ENCODE measurements at regions of chr13 and their contacts with region 1.

Region 1: DNA sequence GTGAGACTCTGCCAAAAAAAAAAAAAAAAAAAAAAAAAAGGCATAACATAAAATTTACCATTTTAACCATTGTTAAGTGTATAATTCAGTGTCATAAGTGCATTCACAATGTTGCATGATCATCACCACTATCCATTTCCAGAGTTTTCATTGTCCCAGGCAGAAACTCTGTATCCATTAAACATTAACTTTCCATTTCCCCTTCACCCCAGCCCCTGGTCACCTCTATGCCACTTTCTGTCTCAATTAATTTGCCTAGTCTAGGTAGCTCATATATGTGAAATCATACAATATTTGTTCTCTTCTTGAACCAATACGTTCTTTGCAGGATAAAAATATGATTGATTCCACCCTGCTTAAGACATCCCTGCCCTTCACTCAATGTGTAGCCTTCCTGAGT is 31.0 kb upstream of the VWA8 start:
- DNase-seq: no peak
- H3K4me3 Mint-ChIP-seq: no peak overlapping the region
- H3K27ac Mint-ChIP-seq: no peak overlapping the region
- H3K4me1 Mint-ChIP-seq: peaks cover 2% of the 10 kb centered on the region
- H3K27me3 Mint-ChIP-seq: peaks cover 5% of the 10 kb centered on the region

Region 2: GRCh38 chr13:41978007-41978406 is 13.9 kb before region 1 on chr13:
- CTCF ChIA-PET with region 1: interaction called, 12 read pairs
- POLR2A ChIA-PET with region 1: no interaction called
- DNase-seq: no peak
- H3K4me3 Mint-ChIP-seq: no peak overlapping the region
- H3K27ac Mint-ChIP-seq: no peak overlapping the region
- H3K4me1 Mint-ChIP-seq: peaks cover 22% of the 10 kb centered on the region
- H3K27me3 Mint-ChIP-seq: peaks cover 9% of the 10 kb centered on the region

Measured in activated CD4-positive, alpha-beta T cell treated with anti-CD3 and anti-CD28 coated beads, Interleukin-2, amount 10 ng/mL, durations not matched to agents 7 days and 5 days (primary cell).